Activated B cell treated with CpG ODN at 0.5 μM for 24 hours (primary cell): ENCODE measurements at regions of chr15 and their contacts with region 1.

Region 1: GRCh38 chr15:90869601-90870353 is 1.4 kb downstream of the FURIN start:
- DNase-seq: no peak
- ATAC-seq: peak; percentile 47
- H3K4me3 Mint-ChIP-seq: peak overlapping the region; percentile 90
- H3K27ac Mint-ChIP-seq: peak overlapping the region; percentile 59
- H3K4me1 Mint-ChIP-seq: peaks cover 43% of the 10 kb centered on the region
- H3K27me3 Mint-ChIP-seq: no peaks in the 10 kb centered on the region
- CTCF ChIP-seq: no peak

Region 2: GRCh38 chr15:90716976-90717821 is 152.6 kb before region 1 on chr15 and contains the start of gene BLM:
- CTCF ChIA-PET with region 1: no interaction called
- POLR2A ChIA-PET with region 1: interaction called, 5 read pairs
- intact Hi-C with region 1: loop called (anchors 5 kb)
- DNase-seq: peak; percentile 87
- ATAC-seq: peak; percentile 99
- H3K4me3 Mint-ChIP-seq: peak within 1 kb of the TSS; percentile 96
- H3K27ac Mint-ChIP-seq: peak within 1 kb of the TSS; percentile 94
- H3K4me1 Mint-ChIP-seq: peaks cover 30% of the 10 kb centered on the region
- H3K27me3 Mint-ChIP-seq: no peaks in the 10 kb centered on the region
- CTCF ChIP-seq: no peak
- total RNA-seq, gene BLM: 18.2 and 23.4 TPM in 2 replicates

Region 3: GRCh38 chr15:90818251-90819210 is 51.2 kb before region 1 on chr15:
- CTCF ChIA-PET with region 1: interaction called, 7 read pairs
- POLR2A ChIA-PET with region 1: interaction called, 10 read pairs
- intact Hi-C with region 1: loop called (anchors 1 kb)
- DNase-seq: peak; percentile 60
- ATAC-seq: peak; percentile 95
- H3K4me3 Mint-ChIP-seq: peak overlapping the region; percentile 41
- H3K27ac Mint-ChIP-seq: peak overlapping the region; percentile 66
- H3K4me1 Mint-ChIP-seq: peaks cover 46% of the 10 kb centered on the region
- H3K27me3 Mint-ChIP-seq: no peaks in the 10 kb centered on the region
- CTCF ChIP-seq: no peak

Region 4: GRCh38 chr15:90839187-90840071 is 30.3 kb before region 1 on chr15:
- CTCF ChIA-PET with region 1: interaction called, 3 read pairs
- POLR2A ChIA-PET with region 1: interaction called, 14 read pairs
- intact Hi-C with region 1: loop called (anchors 2 kb)
- DNase-seq: no peak
- ATAC-seq: peak; percentile 62
- H3K4me3 Mint-ChIP-seq: peak overlapping the region; percentile 55
- H3K27ac Mint-ChIP-seq: no peak overlapping the region
- H3K4me1 Mint-ChIP-seq: peaks cover 45% of the 10 kb centered on the region
- H3K27me3 Mint-ChIP-seq: no peaks in the 10 kb centered on the region
- CTCF ChIP-seq: no peak

Region 5: DNA sequence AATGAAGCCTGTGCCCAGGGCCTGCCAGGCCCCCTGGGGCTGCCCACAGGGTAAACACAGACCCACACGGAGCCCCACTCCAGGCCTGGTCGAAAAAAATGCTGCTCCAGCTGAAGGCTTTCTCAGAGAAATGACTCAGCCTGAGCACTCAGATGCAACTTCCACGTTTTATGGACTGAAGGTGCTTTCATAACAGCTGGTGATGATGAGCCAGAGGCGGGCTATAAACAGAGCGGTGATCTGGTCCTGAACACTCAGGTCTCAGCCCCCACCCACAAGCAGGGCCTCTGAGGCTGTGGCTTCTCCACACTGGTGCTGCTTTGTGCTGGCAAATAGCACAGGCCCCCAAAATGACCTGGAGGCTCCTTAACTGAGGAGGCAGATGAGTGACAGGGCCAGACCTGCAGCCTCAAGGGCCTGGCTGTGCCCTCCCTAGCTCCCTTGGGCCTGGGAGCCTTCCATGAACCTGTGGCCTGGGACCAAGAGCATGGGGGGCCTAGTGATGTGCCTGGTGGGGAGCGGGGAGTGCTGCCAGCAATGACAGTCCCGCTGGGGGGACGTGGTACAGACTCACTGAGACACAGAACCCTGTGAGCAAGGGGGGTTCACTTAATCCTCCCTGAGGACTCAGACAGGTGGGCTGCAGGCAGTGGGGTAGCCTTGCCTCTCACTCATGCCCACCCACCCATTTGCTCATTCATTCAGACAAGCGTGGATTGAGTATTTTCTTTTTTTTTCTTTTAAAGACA is 24.4 kb before region 1 on chr15:
- CTCF ChIA-PET with region 1: no interaction called
- POLR2A ChIA-PET with region 1: interaction called, 35 read pairs
- intact Hi-C with region 1: loop called (anchors 2 kb)
- DNase-seq: peak; percentile 49
- ATAC-seq: peak; percentile 94
- H3K4me3 Mint-ChIP-seq: peak overlapping the region; percentile 19
- H3K27ac Mint-ChIP-seq: peak overlapping the region; percentile 71
- H3K4me1 Mint-ChIP-seq: peaks cover 25% of the 10 kb centered on the region
- H3K27me3 Mint-ChIP-seq: no peaks in the 10 kb centered on the region
- CTCF ChIP-seq: no peak

Region 6: GRCh38 chr15:90851114-90851513 is 18.7 kb before region 1 on chr15:
- CTCF ChIA-PET with region 1: interaction called, 3 read pairs
- POLR2A ChIA-PET with region 1: interaction called, 35 read pairs
- intact Hi-C with region 1: loop called (anchors 1 kb)
- DNase-seq: no peak
- ATAC-seq: no peak
- H3K4me3 Mint-ChIP-seq: peak overlapping the region; percentile 53
- H3K27ac Mint-ChIP-seq: no peak overlapping the region
- H3K4me1 Mint-ChIP-seq: peaks cover 57% of the 10 kb centered on the region
- H3K27me3 Mint-ChIP-seq: no peaks in the 10 kb centered on the region
- CTCF ChIP-seq: no peak

Region 7: GRCh38 chr15:90902040-90902839 is 32.5 kb after region 1 on chr15:
- CTCF ChIA-PET with region 1: no interaction called
- POLR2A ChIA-PET with region 1: interaction called, 20 read pairs
- intact Hi-C with region 1: no loop called
- DNase-seq: peak; percentile 75
- ATAC-seq: peak; percentile 71
- H3K4me3 Mint-ChIP-seq: peak overlapping the region; percentile 87
- H3K27ac Mint-ChIP-seq: peak overlapping the region; percentile 86
- H3K4me1 Mint-ChIP-seq: peaks cover 34% of the 10 kb centered on the region
- H3K27me3 Mint-ChIP-seq: no peaks in the 10 kb centered on the region
- CTCF ChIP-seq: no peak